ENCODE measurements at regions of chr1 and their contacts with region 1.

Region 1: GRCh38 chr1:156456622-156457465 is 43.7 kb downstream of the MEF2D start:
- DNase-seq: peak; percentile 99
- H3K4me3 Mint-ChIP-seq: peak overlapping the region; percentile 86
- H3K27ac Mint-ChIP-seq: peak overlapping the region; percentile 99
- H3K4me1 Mint-ChIP-seq: peaks cover 29% of the 10 kb centered on the region
- H3K27me3 Mint-ChIP-seq: no peaks in the 10 kb centered on the region

Region 2: DNA sequence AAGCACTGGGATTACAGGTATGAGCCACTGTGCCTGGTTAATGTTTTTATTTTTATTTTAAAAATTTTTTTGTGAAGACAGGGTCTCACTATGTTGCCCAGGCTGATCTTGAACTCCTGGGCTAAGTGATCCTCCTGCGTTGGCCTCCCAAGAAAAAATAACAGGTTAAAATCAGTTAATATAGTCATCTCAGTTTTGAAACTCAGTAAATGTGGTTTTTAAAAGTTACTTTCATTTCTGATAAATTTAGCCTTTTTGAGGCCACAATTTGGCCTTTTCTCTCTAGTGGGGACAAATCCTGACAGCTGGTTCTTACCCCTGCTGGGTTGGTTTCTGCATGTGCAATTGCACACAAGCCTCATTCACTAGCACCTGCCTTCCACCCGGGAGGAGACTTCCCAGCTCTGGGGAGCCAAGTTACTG is 230.7 kb before region 1 on chr1:
- CTCF ChIA-PET with region 1: no interaction called
- POLR2A ChIA-PET with region 1: no interaction called
- intact Hi-C with region 1: no loop called
- DNase-seq: peak; percentile 61
- H3K4me3 Mint-ChIP-seq: no peak overlapping the region
- H3K27ac Mint-ChIP-seq: peak overlapping the region; percentile 91
- H3K4me1 Mint-ChIP-seq: peaks cover 54% of the 10 kb centered on the region
- H3K27me3 Mint-ChIP-seq: no peaks in the 10 kb centered on the region

Region 3: GRCh38 chr1:156295391-156295947 is 161.4 kb before region 1 on chr1 and contains the start of gene GLMP:
- CTCF ChIA-PET with region 1: no interaction called
- POLR2A ChIA-PET with region 1: no interaction called
- intact Hi-C with region 1: no loop called
- DNase-seq: peak; percentile 72
- H3K4me3 Mint-ChIP-seq: peak within 1 kb of the TSS; percentile 84
- H3K27ac Mint-ChIP-seq: no peak within 1 kb of the TSS
- H3K4me1 Mint-ChIP-seq: peaks cover 16% of the 10 kb centered on the region
- H3K27me3 Mint-ChIP-seq: no peaks in the 10 kb centered on the region
- total RNA-seq, gene GLMP: 13.0 to 14.8 TPM

Region 4: DNA sequence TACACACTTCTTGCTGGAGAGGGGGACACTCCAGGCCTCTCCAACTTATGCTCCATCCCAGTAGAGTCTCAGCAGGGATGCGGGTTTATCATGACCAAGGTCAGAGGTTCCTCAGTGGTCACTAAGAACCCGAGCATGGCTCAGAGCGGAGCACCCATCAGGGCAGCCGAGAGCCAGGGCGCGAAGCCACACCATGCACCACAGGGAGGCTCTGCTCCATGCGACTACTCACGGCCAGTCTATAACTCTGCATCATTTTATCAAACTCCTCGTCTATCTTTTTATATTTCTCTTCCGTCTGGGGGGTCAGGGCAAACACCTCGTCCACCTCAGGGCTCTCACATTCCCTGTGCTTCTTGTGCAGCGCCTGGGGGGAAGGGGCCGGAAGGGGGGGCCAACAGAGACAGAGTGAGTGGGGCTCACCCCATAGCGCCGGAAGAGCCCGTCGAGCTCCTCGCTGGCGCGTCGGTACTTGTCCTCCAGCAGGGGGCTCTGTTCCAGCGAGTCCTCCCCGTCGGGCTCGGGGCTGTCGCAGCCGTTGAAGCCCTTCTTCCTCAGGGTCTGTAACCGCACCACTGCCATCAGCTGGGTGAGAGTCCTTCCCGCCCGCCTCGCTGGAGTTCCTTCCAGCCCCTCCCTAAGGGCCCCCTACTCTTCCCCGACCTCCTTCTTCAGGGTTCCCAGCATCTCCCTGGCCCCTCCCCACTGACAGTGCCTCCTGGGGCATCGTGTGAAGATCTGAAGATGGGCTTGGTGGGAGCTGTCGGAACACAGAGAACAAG is 23.8 kb after region 1 on chr1:
- CTCF ChIA-PET with region 1: interaction called, 14 read pairs
- POLR2A ChIA-PET with region 1: interaction called, 8 read pairs
- intact Hi-C with region 1: loop called (anchors 2 kb)
- DNase-seq: peak; percentile 83
- H3K4me3 Mint-ChIP-seq: peak overlapping the region; percentile 39
- H3K27ac Mint-ChIP-seq: peak overlapping the region; percentile 79
- H3K4me1 Mint-ChIP-seq: peaks cover 66% of the 10 kb centered on the region
- H3K27me3 Mint-ChIP-seq: no peaks in the 10 kb centered on the region

Region 5: DNA sequence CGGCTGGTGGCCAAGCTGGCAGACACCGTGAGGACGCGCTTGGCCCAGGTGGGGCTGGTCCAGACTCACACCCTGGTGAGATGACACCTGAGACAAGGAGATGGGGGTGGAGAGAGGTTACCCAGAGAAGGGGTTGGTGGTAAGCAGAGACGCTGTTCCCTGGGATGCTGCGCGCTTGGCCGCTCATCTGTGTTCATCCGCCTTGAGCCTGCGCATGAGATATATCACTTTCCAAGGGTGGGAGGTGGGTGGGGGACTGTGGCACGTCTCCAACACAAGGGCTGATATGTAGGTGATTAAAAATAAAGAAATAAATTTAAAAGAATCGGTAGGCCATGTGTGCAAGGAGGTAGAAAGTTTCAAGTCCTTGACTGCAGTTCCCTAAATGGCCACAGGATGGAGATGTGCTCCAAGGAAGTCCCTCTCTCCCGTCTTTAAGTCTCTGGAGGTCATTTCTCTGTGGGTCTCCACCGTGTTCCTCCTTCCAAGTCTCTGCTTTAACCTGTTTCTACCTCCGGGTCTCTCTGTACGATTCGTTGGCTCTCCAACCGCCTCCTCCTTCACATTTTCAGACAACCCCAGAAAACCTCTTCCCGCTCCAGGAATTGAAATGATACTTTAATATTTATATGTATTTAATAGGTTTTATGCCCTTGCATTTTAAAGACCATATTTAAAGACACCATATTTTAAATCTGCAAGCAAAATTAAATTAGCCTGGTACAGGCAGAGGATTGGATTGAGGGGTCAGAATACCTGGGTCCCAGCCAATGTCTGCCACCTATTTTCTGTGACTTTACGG is 127.2 kb after region 1 on chr1:
- CTCF ChIA-PET with region 1: interaction called, 3 read pairs
- POLR2A ChIA-PET with region 1: no interaction called
- intact Hi-C with region 1: loop called (anchors 1 kb)
- DNase-seq: peak; percentile 79
- H3K4me3 Mint-ChIP-seq: no peak overlapping the region
- H3K27ac Mint-ChIP-seq: no peak overlapping the region
- H3K4me1 Mint-ChIP-seq: peaks cover 2% of the 10 kb centered on the region
- H3K27me3 Mint-ChIP-seq: no peaks in the 10 kb centered on the region

Region 6: DNA sequence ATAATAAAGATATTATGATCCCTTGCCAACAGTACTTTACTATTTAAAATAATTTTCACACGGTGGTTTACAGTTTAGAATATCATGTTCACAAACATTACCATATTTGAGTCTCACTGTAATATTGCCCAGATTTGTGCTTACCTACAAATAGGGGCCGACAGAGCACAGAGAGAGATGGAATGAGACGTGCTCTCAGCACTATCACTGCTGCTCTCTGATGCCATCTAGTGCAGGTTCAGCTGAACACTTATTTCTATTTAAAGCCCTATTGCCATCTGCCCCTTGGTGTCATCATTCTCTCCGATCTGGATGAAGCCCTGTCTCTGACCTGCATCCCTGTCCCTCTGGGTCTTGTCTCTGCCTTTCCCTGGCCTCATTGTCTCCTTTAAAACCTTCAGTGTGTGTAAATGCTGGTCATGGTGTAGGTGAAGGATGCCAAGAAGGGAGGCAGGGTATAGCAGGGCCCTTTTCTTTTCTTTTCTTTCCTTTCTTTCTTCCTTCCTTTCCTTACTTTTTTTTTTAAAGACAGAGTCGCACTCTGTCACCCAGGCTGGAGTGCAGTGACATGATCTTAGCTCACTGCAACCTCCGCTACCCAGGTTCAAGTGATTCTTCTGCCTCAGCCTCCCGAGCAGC is 151.3 kb after region 1 on chr1:
- CTCF ChIA-PET with region 1: interaction called, 10 read pairs
- POLR2A ChIA-PET with region 1: no interaction called
- intact Hi-C with region 1: loop called (anchors 1 kb)
- DNase-seq: peak; percentile 66
- H3K4me3 Mint-ChIP-seq: no peak overlapping the region
- H3K27ac Mint-ChIP-seq: no peak overlapping the region
- H3K4me1 Mint-ChIP-seq: peaks cover 3% of the 10 kb centered on the region
- H3K27me3 Mint-ChIP-seq: peaks cover 9% of the 10 kb centered on the region

Measured in activated CD4-positive, alpha-beta memory T cell treated with anti-CD3 and anti-CD28 coated beads for 36 hours (primary cell).